ENCODE measurements at regions of chr1 and their contacts with region 1.

Region 1: GRCh38 chr1:26177182-26177684 is at the start of gene CNKSR1:
- DNase-seq: peak; percentile 84
- ATAC-seq: peak; percentile 100
- H3K4me3 ChIP-seq: peak within 1 kb of the TSS; percentile 65 to 72
- H3K27ac ChIP-seq: peak within 1 kb of the TSS; percentile 46
- H3K4me1 ChIP-seq: peaks cover 11 to 25% of the 10 kb centered on the region in 2 experiments
- H3K27me3 ChIP-seq: no peaks in the 10 kb centered on the region
- CTCF ChIP-seq: peak; percentile 20 to 71 (median 61); a peak in 5 of 6 replicates
- POLR2A ChIP-seq: peak; percentile 63
- RAD21 ChIP-seq: no peak
- total RNA-seq, gene CNKSR1: 26.6 TPM

Region 2: DNA sequence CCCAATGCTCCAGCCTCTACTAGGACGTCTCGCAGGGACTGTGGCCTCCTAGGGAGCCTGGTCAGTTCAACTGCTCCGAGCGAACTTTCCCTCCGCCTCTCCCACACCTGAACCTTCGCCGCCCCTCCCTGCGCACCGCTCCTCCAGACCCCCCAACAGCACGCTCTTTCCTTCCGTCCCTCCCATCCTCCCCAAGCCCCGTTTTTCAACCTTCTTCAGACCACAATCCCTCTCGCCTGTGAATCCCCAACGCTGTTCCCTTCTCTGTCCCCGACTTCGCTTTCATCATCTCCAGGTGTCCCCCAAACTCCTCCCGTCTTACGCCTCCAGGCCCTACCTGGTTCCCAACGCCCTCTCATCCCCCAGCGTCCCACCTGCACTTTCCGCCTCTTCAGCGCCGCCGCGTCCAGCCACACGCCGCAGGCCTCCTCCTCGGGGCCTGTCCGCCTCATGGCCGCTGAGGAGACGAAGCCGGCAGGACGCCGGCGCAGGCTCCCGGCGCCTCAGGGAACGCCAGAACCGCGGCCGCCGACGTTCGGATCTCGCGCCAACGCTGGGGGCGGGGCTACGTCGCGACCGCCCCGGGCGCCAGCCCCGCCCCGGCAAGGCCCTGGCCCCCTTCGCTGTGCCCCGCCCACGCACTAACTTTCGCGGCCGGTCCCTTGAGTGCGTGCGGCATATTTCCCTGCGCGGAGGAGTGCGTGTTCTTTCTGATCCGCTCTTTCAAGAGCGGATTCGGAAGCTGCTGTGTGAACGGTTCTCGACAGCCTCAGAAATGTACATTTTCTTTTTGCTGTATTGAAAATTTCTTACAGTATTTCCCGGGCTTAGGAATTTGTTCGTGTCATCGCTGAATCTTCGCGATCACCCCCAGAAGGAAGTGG is 318.1 kb before region 1 on chr1 and contains the start of gene AUNIP:
- CTCF ChIA-PET with region 1: no interaction called
- POLR2A ChIA-PET with region 1: no interaction called
- RAD21 ChIA-PET with region 1: no interaction called
- intact Hi-C with region 1: no loop called
- DNase-seq: peak; percentile 74
- ATAC-seq: peak; percentile 83
- H3K4me3 ChIP-seq: peak within 1 kb of the TSS; percentile 97 to 99
- H3K27ac ChIP-seq: peak within 1 kb of the TSS; percentile 81
- H3K4me1 ChIP-seq: peaks cover 30 to 51% of the 10 kb centered on the region in 2 experiments
- H3K27me3 ChIP-seq: no peaks in the 10 kb centered on the region
- CTCF ChIP-seq: no peak
- POLR2A ChIP-seq: peak; percentile 79
- RAD21 ChIP-seq: no peak
- total RNA-seq, gene AUNIP: 12.1 TPM

Region 3: DNA sequence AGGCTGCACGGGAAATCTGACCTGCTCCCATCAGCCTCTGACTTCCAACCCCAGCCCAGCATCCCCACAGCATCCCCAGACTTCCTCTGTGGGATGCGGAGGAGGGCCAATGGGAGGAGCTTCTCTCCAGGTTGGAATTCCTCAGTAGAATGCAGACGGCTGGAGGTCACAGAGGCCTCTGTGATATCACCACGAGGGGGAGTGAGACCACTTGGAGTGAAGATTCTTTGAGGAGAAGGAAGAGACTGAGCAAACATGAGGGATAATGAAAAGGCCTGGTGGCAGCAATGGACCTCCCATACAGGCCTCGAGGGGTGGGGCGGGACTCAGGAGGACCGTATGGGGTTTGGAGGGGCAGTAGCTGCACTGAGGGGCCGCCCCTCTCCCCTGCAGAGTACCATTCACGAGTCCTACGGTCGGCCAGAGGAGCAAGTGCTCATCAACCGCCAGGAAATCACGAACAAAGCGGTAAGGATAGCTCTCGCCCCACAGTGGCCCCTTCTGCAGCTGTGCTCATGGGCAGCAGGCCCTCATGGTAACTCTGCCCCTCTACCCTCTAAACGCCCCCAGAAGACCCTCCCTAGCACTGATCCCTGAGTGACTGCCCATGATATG is 13.2 kb after region 1 on chr1 and contains the start of gene CATSPER4:
- CTCF ChIA-PET with region 1: interaction called, 13 read pairs
- POLR2A ChIA-PET with region 1: interaction called, 6 read pairs
- RAD21 ChIA-PET with region 1: no interaction called
- intact Hi-C with region 1: no loop called
- DNase-seq: no peak
- ATAC-seq: peak; percentile 82
- H3K4me3 ChIP-seq: no peak within 1 kb of the TSS
- H3K27ac ChIP-seq: no peak within 1 kb of the TSS
- H3K4me1 ChIP-seq: no peaks in the 10 kb centered on the region
- H3K27me3 ChIP-seq: no peaks in the 10 kb centered on the region
- CTCF ChIP-seq: peak; percentile 21 to 32 (median 25); a peak in 4 of 6 replicates
- POLR2A ChIP-seq: no peak
- RAD21 ChIP-seq: peak; percentile 46
- total RNA-seq, gene CATSPER4: not detected

Measured in HCT116 (cell line).